GM12878 (cell line): ENCODE measurements at regions of chr12 and their contacts with region 1.

Region 1: GRCh38 chr12:54853995-54854566 is at the start of gene MUCL1:
- DNase-seq: peak; percentile 28
- ATAC-seq: peak; percentile 100
- H3K4me3 ChIP-seq: no peak within 1 kb of the TSS
- H3K27ac ChIP-seq: no peak within 1 kb of the TSS
- H3K4me1 ChIP-seq: no peaks in the 10 kb centered on the region
- H3K27me3 ChIP-seq: no peaks in the 10 kb centered on the region
- CTCF ChIP-seq: peak; percentile 83 to 92 (median 89); a peak in 5 of 6 replicates
- EP300 ChIP-seq: no peak
- POLR2A ChIP-seq: no peak
- RAD21 ChIP-seq: peak; percentile 93
- polyA plus RNA-seq, gene MUCL1: not detected

Region 2: DNA sequence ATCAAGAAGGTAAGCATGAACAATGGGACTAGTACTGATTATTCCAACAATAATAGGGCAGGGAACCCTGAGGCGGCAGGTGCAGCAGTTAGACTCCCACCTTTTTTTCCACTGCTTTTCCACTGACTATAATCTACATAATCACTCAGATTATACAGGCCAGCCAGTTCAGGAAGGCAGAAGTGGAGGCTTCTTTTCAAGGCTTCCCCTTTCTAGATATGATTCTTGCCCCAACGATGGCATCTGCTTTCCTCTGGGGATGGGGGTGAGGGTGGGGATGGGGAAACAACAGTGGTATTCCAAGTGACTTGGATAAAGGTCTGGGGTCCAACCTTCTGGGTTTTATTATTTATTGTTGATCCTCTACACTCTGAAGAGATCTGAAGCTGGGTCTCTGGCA is 356.2 kb before region 1 on chr12:
- CTCF ChIA-PET with region 1: no interaction called
- POLR2A ChIA-PET with region 1: no interaction called
- RAD21 ChIA-PET with region 1: no interaction called
- SMC1A ChIA-PET with region 1: no interaction called
- in situ Hi-C with region 1: no loop called
- intact Hi-C with region 1: no loop called
- DNase-seq: no peak
- ATAC-seq: peak; percentile 3
- H3K4me3 ChIP-seq: peak overlapping the region; percentile 82
- H3K27ac ChIP-seq: peak overlapping the region; percentile 91
- H3K4me1 ChIP-seq: peaks cover 3% of the 10 kb centered on the region; the same call in 1 of the 2 replicates
- H3K27me3 ChIP-seq: no peaks in the 10 kb centered on the region
- CTCF ChIP-seq: no peak
- EP300 ChIP-seq: no peak
- POLR2A ChIP-seq: no peak
- RAD21 ChIP-seq: no peak

Region 3: DNA sequence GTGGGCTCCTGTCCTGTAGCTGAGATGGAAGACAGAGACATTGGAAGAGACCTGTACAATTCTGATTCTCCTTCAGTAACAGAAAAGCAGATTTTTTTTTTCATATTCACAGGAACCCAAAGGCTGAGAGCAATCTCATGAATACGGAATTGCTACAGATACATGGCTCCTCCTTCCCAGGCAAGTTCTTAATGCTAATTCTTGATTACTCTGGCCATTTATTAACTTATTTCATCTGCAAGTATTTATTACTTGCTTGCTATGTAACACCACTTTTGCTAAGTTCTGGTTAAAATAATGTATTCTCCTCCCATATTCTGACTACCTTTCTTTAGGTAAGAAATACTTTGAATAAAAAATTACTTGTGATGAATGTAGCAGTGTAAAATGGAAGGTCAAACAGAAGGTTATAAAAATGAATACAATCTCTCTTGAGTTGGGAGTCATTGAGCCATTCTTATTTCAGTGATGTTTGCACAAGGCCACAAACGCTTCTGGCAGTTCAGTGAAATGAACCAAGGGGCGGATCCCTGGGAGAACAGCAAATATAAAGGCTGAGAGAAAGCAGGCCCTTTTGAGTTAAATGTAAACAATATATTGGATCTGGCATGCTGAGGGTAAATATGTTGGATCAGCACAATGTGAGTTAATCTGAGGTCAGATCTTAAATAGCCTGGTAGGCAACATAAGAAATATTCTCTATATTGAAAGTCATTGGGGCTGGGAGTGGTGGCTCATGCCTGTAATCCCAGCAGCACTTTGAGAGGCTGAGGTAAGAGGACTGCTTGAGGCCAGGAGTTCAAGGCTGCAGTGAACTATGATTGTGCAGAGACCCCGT is 37.9 kb after region 1 on chr12:
- CTCF ChIA-PET with region 1: no interaction called
- POLR2A ChIA-PET with region 1: no interaction called
- RAD21 ChIA-PET with region 1: no interaction called
- SMC1A ChIA-PET with region 1: no interaction called
- in situ Hi-C with region 1: no loop called
- intact Hi-C with region 1: no loop called
- DNase-seq: no peak
- ATAC-seq: no peak
- H3K4me3 ChIP-seq: no peak overlapping the region
- H3K27ac ChIP-seq: no peak overlapping the region
- H3K4me1 ChIP-seq: no peaks in the 10 kb centered on the region
- H3K27me3 ChIP-seq: no peaks in the 10 kb centered on the region
- CTCF ChIP-seq: no peak
- EP300 ChIP-seq: no peak
- POLR2A ChIP-seq: no peak
- RAD21 ChIP-seq: no peak

Region 4: DNA sequence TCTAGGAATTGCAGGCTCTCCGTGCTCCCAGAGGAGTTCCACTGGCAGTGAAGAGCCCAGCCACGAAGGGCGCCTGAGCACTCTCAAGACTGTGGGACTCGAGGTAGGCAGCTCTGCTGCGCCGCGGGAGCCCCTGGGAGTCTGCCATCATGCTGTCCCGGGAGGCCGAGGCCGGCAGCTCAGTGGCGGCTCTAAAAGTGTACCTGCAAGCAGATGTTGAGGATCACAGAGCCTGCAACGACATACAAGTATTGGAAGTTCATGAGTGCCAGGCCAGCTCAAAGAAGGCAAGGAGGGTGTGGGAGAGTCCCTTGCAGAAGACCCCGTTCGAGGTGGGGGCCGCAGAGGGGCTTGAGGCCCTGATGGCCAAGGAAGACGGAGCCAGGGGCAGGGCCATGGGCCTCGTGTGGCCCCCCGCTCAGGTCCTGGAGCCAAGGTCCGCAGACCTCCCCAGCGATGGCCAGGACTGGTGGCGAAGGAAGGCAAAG is 63.0 kb after region 1 on chr12:
- CTCF ChIA-PET with region 1: no interaction called
- POLR2A ChIA-PET with region 1: no interaction called
- RAD21 ChIA-PET with region 1: no interaction called
- SMC1A ChIA-PET with region 1: no interaction called
- in situ Hi-C with region 1: no loop called
- intact Hi-C with region 1: no loop called
- DNase-seq: no peak
- ATAC-seq: no peak
- H3K4me3 ChIP-seq: no peak overlapping the region
- H3K27ac ChIP-seq: no peak overlapping the region
- H3K4me1 ChIP-seq: no peaks in the 10 kb centered on the region
- H3K27me3 ChIP-seq: no peaks in the 10 kb centered on the region
- CTCF ChIP-seq: no peak
- EP300 ChIP-seq: no peak
- POLR2A ChIP-seq: no peak
- RAD21 ChIP-seq: no peak

Region 5: DNA sequence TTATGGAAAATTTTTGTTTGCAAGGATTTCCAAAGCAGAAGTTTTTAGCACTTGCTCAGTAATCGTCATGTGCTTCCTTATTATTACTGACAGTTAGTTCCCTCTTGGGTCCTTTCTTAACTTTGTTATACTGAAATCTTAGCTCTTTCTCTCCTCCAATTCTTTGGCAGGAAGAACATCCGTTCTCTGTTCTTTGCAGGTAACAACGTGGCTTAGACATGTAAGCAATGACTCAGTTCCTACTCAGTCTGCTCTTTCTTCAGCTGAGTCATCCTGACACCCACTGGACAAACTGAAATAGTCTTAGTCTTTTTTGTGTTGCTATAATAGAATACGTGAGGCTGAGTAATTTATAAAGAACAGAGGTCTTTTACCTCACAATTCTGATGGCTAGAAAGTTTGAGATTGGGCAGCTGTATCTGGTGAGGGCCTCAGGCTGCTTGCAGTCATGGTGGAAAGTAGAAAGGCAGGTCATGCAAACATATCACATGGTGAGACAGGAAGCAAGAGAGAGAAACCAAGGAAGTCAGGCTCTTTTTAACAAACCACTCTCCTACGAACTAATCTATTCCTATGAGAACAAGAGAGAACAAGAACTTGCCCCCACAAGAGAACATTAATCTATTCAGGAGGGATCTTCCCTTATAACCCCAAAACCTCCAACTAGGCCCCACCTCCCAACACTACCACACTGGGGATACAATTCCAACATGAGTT is 81.3 kb after region 1 on chr12:
- CTCF ChIA-PET with region 1: interaction called, 4 read pairs
- POLR2A ChIA-PET with region 1: no interaction called
- RAD21 ChIA-PET with region 1: interaction called, 4 read pairs
- SMC1A ChIA-PET with region 1: interaction called, 6 read pairs
- in situ Hi-C with region 1: loop called (anchors 5 kb)
- intact Hi-C with region 1: loop called (anchors 5 kb)
- DNase-seq: peak; percentile 60
- ATAC-seq: peak; percentile 98
- H3K4me3 ChIP-seq: no peak overlapping the region
- H3K27ac ChIP-seq: peak overlapping the region; percentile 60
- H3K4me1 ChIP-seq: peaks cover 5% of the 10 kb centered on the region
- H3K27me3 ChIP-seq: no peaks in the 10 kb centered on the region
- CTCF ChIP-seq: peak in 2 of 3 experiments; percentile 1 to 39; a peak in 2 of 6 replicates
- EP300 ChIP-seq: no peak
- POLR2A ChIP-seq: no peak
- RAD21 ChIP-seq: peak; percentile 63

Region 6: GRCh38 chr12:55142669-55143565 is 288.8 kb after region 1 on chr12:
- CTCF ChIA-PET with region 1: no interaction called
- POLR2A ChIA-PET with region 1: no interaction called
- RAD21 ChIA-PET with region 1: no interaction called
- SMC1A ChIA-PET with region 1: no interaction called
- in situ Hi-C with region 1: no loop called
- intact Hi-C with region 1: loop called (anchors 5 kb)
- DNase-seq: no peak
- ATAC-seq: peak; percentile 68
- H3K4me3 ChIP-seq: no peak overlapping the region
- H3K27ac ChIP-seq: no peak overlapping the region
- H3K4me1 ChIP-seq: no peaks in the 10 kb centered on the region
- H3K27me3 ChIP-seq: no peaks in the 10 kb centered on the region
- CTCF ChIP-seq: peak; percentile 61 to 72 (median 71)
- EP300 ChIP-seq: no peak
- POLR2A ChIP-seq: no peak
- RAD21 ChIP-seq: peak; percentile 58